Dendritic cell treated with granulocyte-macrophage colony-stimulating factor and Interleukin-4, amounts not matched to agents 40 ng/mL and 50 ng/mL, for 4 days (primary cell): ENCODE measurements at regions of chr22 and their contacts with region 1.

Region 1: DNA sequence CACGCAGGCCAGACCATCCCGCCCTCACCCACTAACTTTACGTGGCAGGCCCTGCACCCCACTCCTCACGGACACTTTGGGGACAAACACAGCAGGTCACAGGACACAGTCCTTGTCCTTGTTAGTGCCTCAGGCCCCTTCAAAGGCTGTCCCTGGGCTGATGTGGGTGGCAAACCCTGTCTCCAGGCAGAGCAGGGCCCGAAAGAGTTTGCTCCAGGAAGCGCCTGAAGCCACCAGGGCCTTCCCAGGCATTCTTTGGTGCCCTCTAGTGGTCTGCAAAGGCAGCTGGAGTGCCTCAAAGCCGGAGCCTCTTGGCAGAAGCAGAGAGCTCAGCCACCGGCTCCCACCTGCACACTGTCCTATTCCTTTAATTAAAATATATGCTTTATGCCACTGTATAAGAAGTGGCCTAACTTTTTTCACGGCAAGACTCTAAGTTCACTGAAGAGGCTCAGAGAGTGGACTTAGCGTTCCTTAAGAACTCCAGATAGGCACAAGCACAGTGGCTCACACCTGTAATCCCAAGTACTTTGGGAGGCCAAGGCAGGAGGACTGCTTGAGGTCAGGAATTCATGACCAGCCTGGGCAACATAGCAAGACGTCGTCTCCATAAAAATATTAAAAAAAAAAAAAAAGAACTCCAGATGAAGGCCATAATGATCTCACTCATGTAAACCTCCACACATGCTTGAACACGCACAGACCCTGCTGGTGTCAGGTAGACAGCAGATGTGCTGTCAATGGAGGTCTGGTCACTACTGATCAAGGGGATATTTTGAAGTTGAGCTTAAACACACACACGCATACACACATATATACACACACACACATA is 11.1 kb downstream of the TXN2 start:
- H3K4me3 Mint-ChIP-seq: no peak overlapping the region
- H3K27ac Mint-ChIP-seq: no peak overlapping the region
- H3K4me1 Mint-ChIP-seq: peaks cover 52% of the 10 kb centered on the region
- H3K27me3 Mint-ChIP-seq: peaks cover 1% of the 10 kb centered on the region

Region 2: DNA sequence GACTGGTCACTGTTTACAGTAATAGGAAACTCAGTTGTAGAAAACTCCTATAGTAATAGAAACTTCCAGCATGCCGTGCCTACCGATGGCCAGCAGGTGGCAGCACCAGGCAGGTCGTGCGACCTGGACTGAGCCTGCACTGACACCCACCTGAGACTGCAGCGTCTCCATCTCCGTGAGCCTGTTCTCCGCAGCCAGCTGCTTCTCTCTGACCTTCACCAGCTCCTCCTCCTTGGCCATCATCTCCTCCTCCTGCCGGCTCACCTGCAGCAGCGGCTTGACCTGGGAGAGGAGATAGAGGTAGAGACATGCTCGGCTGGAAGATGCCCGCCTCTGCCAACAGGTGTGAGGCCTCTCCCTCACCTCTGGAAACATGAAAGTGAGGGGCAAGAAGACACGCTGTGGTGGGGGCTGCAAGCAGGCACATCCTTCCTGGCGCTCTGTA is 169.0 kb before region 1 on chr22:
- intact Hi-C with region 1: loop called (anchors 1 kb)
- H3K4me3 Mint-ChIP-seq: no peak overlapping the region
- H3K27ac Mint-ChIP-seq: no peak overlapping the region
- H3K4me1 Mint-ChIP-seq: peaks cover 9% of the 10 kb centered on the region
- H3K27me3 Mint-ChIP-seq: no peaks in the 10 kb centered on the region